A673 (cell line): ENCODE measurements at regions of chr11 and their contacts with region 1.

Region 1: GRCh38 chr11:47454180-47454644 is 5.3 kb upstream of the RAPSN start:
- DNase-seq: peak; percentile 96
- H3K4me3 ChIP-seq: no peak overlapping the region
- H3K27ac ChIP-seq: no peak overlapping the region
- H3K4me1 ChIP-seq: no peaks in the 10 kb centered on the region
- H3K27me3 ChIP-seq: no peaks in the 10 kb centered on the region
- CTCF ChIP-seq: peak; percentile 99

Region 2: DNA sequence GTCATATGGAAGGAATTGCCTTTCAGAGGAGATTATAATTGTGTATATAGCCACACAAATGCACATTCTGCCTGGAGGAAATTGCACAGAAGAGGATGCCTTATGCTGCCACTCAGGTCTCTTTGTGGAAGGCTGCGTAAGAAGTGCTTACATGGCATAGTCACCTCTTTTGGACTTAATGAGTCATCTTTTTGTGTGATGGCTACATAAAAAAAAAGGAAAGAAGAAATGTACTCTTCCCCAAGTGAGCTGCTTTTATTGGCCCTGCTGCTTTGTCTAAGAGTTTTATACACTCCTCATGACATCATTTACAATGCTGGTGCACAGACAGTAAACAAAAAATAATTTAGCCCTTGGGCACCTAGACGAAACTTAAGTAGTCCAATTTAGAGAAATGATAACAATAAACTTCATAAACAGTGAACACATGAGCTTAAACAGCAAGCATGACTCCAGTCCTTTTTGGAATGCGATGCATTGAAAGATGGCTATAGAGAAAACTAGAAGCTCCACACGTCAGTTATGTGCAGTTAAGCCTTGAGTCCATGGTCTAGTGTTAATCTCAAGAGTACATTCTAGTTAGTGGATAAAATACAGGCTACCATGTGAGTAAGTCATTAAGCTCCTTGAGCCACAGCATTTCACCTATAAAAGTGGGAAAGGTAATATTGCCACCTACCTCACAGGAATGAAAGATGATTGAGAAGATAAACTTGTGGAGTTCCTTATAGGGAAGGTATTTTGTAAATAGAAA is 505.7 kb before region 1 on chr11:
- CTCF ChIA-PET with region 1: no interaction called
- POLR2A ChIA-PET with region 1: no interaction called
- intact Hi-C with region 1: no loop called
- DNase-seq: peak; percentile 52
- H3K4me3 ChIP-seq: no peak overlapping the region
- H3K27ac ChIP-seq: no peak overlapping the region
- H3K4me1 ChIP-seq: peaks cover 5% of the 10 kb centered on the region
- H3K27me3 ChIP-seq: no peaks in the 10 kb centered on the region
- CTCF ChIP-seq: no peak

Region 3: DNA sequence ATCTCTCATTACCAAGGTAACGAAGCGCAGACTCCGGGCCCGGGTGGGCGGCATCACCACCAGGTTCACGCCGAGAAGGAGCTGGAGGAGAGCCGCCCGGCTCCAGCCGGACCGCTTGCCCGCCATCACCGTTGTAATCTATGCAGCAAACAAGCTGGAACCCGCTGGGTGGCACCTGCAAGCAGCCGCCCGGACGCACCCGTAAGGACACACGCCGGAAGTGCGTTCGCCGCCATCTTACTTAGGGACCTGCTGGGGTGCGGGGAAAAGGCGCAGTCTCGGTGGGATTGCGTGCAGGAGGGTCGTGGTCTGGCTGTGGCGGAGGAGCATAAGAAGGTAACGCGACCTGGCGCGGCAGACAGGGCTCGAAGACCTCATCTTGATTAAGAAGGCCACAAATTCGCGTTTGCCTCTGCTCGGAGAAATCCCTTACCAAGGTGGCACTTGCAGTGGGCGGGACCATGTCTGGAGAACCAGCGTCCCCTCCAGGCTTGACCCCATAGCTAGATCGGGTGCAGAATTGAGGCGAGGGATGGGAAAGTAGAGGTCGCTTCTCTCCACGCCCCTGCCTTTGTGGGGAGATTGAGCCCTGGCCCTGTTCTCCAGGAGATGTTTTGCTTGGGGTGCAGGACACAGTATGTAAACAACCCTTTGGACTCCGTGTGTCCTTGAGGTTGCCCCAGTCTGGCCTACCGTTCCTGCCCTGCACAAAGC is 205.4 kb before region 1 on chr11 and contains the start of gene ACP2:
- CTCF ChIA-PET with region 1: no interaction called
- POLR2A ChIA-PET with region 1: no interaction called
- intact Hi-C with region 1: no loop called
- DNase-seq: peak; percentile 99
- H3K4me3 ChIP-seq: peak within 1 kb of the TSS; percentile 69
- H3K27ac ChIP-seq: peak within 1 kb of the TSS; percentile 96
- H3K4me1 ChIP-seq: peaks cover 13% of the 10 kb centered on the region
- H3K27me3 ChIP-seq: no peaks in the 10 kb centered on the region
- CTCF ChIP-seq: peak; percentile 68
- total RNA-seq, gene ACP2: 63.3 and 68.1 TPM in 2 replicates

Region 4: GRCh38 chr11:47466701-47467250 is 12.6 kb after region 1 on chr11:
- CTCF ChIA-PET with region 1: interaction called, 23 read pairs
- POLR2A ChIA-PET with region 1: interaction called, 7 read pairs
- intact Hi-C with region 1: no loop called
- DNase-seq: peak; percentile 88
- H3K4me3 ChIP-seq: no peak overlapping the region
- H3K27ac ChIP-seq: peak overlapping the region; percentile 57
- H3K4me1 ChIP-seq: peaks cover 42% of the 10 kb centered on the region
- H3K27me3 ChIP-seq: no peaks in the 10 kb centered on the region
- CTCF ChIP-seq: no peak

Region 5: DNA sequence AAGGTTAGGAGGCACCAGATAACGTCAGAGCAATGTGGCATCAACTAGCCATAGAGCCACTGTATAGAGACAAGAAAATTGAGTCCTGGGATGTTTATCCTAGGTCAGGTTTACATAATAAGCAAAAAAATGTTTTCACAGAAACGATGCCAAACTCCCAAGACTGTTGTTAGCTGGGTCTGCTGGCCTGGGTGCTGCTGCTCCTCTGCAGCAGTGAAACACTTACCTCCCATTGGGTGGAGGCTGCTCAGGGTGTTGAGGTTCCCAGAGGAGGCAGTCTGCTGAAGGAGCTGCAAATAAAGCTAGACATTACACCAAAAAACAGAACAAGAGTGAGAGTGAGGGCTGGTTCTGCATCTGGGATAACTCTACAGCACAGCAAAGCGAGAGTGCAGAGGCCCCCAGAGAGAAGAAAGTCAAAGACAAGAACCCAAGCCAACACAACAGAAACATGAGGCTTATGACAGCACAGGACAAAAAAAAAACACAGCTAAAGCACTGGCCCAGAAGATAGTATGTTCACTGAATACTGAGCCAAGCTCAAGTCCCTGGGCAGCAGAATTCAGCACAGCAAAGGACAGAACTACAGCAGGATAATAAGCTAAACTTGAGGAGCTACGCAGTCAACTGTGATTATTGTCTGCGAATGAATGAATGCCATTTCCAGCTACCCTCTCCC is 24.6 kb after region 1 on chr11:
- CTCF ChIA-PET with region 1: interaction called, 12 read pairs
- POLR2A ChIA-PET with region 1: no interaction called
- intact Hi-C with region 1: no loop called
- DNase-seq: no peak
- H3K4me3 ChIP-seq: no peak overlapping the region
- H3K27ac ChIP-seq: no peak overlapping the region
- H3K4me1 ChIP-seq: no peaks in the 10 kb centered on the region
- H3K27me3 ChIP-seq: no peaks in the 10 kb centered on the region
- CTCF ChIP-seq: no peak

Region 6: GRCh38 chr11:47523468-47524225 is 69.4 kb after region 1 on chr11:
- CTCF ChIA-PET with region 1: interaction called, 12 read pairs
- POLR2A ChIA-PET with region 1: no interaction called
- intact Hi-C with region 1: no loop called
- DNase-seq: peak; percentile 86
- H3K4me3 ChIP-seq: no peak overlapping the region
- H3K27ac ChIP-seq: peak overlapping the region; percentile 46
- H3K4me1 ChIP-seq: peaks cover 36% of the 10 kb centered on the region
- H3K27me3 ChIP-seq: no peaks in the 10 kb centered on the region
- CTCF ChIP-seq: no peak

Region 7: DNA sequence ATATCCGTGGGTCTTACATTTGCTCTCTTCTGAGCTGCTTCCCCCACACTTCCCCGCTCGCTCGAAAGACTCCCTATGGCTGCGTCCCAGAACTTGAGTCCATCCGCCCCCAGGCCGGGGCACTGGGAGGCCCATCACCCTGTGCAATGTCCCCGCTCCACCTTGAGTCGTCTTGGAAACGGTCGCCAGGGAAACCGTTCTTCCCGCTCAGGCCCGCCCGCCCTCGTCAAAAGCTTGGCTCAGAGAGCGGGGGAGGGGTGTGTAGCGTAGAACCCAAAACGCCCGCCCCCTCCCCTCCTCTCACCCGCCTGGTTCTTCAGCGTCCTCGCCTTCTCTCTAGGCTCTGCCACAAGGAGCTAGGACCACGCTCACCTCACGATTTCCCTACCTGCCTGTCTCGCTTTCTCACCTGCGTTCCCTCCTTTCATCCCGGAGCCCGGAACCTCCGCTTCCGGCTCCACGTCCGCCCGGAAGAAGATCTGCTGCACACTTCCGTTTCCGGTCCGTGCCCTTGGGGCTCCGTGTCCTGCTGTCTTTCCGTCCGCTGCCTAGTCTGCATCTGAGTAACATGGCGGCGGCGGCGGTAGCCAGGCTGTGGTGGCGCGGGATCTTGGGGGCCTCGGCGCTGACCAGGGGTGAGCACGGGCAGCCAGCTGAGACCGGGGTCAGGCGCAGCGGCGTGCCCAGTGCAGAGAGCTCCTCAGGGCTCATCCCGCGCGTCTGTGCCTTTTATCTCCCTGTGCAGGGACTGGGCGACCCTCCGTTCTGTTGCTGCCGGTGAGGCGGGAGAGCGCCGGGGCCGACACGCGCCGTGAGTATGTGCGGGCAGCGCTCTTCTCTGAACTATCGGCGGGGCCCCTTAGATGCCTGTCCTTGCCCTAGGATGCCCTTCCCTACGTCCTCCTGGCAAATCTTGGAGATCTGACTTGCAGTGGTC is 124.6 kb after region 1 on chr11 and contains the starts of genes KBTBD4 and NDUFS3:
- CTCF ChIA-PET with region 1: interaction called, 4 read pairs
- POLR2A ChIA-PET with region 1: interaction called, 10 read pairs
- intact Hi-C with region 1: no loop called
- DNase-seq: peak; percentile 98
- H3K4me3 ChIP-seq: peak within 1 kb of the TSS; percentile 69
- H3K27ac ChIP-seq: peak within 1 kb of the TSS; percentile 89
- H3K4me1 ChIP-seq: peaks cover 25% of the 10 kb centered on the region
- H3K27me3 ChIP-seq: no peaks in the 10 kb centered on the region
- CTCF ChIP-seq: no peak
- total RNA-seq, gene KBTBD4: 42.8 and 44.0 TPM in 2 replicates
- total RNA-seq, gene NDUFS3: 412 and 444 TPM in 2 replicates